A549 (cell line): ENCODE measurements at regions of chr5 and their contacts with region 1.

Region 1: GRCh38 chr5:36690041-36690961 is 83.9 kb downstream of the SLC1A3 start:
- DNase-seq: peak; percentile 79 to 85
- ATAC-seq: peak; percentile 90 to 95
- H3K4me3 ChIP-seq: peak overlapping the region; percentile 45
- H3K27ac ChIP-seq: peak overlapping the region; percentile 26 to 71; a peak in 5 of 6 replicates
- H3K4me1 ChIP-seq: 0 out of 3 replicates have a peak, but pooled peaks cover 4% of the 10 kb centered on the region
- CTCF ChIP-seq: peak; percentile 67
- EP300 ChIP-seq: no peak
- POLR2A ChIP-seq: no peak
- RAD21 ChIP-seq: peak in 1 of 2 experiments; percentile 29; a peak in 2 of 5 replicates

Region 2: DNA sequence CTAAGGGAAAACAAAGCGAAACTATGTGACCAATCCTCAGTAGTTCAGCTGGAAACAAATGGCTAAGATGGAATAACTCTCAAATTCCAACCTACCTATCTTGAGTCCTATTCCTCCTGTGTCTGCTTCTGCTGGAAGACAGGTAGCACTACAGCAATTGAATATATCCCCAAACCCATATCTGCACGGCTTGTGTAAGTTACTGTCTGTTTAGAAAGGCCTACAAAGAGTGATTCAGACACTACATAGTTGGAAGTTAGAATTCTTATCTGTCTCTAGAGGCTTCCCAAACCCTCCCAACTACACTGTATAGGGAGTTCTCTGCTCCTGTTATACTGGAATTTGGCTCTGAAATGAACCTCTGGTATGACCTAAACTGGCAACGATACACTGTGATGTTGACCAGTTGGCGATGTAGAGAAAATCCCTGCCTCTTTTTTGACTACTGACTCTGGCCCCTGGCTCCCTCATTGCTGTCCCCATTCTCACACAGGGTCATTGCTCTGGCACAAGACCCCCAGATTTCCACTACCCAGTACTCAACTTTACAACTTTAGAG is 426.0 kb before region 1 on chr5:
- CTCF ChIA-PET with region 1: interaction called, 15 read pairs
- POLR2A ChIA-PET with region 1: no interaction called
- DNase-seq: no peak
- ATAC-seq: 0 out of 6 replicates have a peak, but pooled peaks of 1 of the 2 experiments have one; percentile 39
- H3K4me3 ChIP-seq: no peak overlapping the region
- H3K27ac ChIP-seq: no peak overlapping the region
- H3K4me1 ChIP-seq: no peaks in the 10 kb centered on the region
- CTCF ChIP-seq: no peak
- EP300 ChIP-seq: no peak
- POLR2A ChIP-seq: no peak
- RAD21 ChIP-seq: no peak

Region 3: DNA sequence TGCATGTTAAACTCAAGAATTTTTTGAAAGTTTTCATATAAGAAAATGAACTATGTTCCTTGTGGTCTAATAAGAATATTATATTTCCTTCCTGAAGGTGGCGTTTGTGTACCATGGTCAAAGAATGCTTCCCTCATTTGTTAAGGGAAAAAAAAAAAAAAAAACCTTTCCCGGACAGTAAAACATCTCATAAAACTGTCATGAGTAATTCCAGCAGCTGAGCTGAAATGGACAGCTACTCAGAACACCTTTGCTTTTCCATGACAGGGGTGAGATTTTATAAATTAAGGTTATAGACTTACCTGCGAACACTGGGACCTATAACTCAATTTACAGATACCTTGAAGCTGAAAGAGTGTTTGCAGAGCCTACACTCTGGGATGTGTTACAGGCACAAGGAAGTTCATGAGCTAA is 275.4 kb before region 1 on chr5:
- CTCF ChIA-PET with region 1: interaction called, 60 read pairs
- POLR2A ChIA-PET with region 1: no interaction called
- DNase-seq: peak in 1 of 2 experiments; percentile 55
- ATAC-seq: peak in 1 of 2 experiments; percentile 50; a peak in 3 of 6 replicates
- H3K4me3 ChIP-seq: no peak overlapping the region
- H3K27ac ChIP-seq: no peak overlapping the region
- H3K4me1 ChIP-seq: no peaks in the 10 kb centered on the region
- CTCF ChIP-seq: peak; percentile 57
- EP300 ChIP-seq: no peak
- POLR2A ChIP-seq: no peak
- RAD21 ChIP-seq: peak; percentile 60 to 67

Region 4: DNA sequence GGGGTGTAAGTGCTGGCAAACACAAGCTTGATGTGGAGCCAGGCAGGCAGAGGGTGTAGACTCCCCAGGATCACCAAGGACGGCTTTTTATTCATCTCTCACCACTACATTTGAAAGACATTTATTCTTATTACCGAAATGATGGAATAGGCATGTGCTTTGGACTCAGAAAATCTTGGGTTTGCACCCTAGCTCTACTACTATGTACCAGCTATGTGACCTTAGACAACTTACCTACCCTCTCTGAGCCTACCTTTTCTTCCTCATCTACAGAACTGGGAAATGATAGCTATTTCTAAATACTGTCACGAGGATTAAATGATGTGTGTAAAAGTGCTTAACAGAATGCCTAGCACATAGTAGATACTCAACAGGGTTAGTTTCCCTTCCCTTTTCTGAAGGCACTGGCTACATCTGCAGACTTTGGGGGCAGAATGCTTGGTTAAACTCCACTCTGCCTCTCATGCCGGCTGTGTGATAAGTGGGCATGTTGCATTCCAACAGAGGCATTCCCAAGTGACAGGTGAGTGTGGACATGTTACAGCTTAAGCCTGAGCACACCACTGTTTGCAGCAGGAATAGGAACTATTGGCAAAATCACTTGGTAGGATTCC is 10.9 kb after region 1 on chr5:
- CTCF ChIA-PET with region 1: interaction called, 16 read pairs
- POLR2A ChIA-PET with region 1: no interaction called
- DNase-seq: no peak
- ATAC-seq: no peak
- H3K4me3 ChIP-seq: no peak overlapping the region
- H3K27ac ChIP-seq: no peak overlapping the region
- H3K4me1 ChIP-seq: no peaks in the 10 kb centered on the region
- CTCF ChIP-seq: no peak
- EP300 ChIP-seq: no peak
- POLR2A ChIP-seq: no peak
- RAD21 ChIP-seq: no peak

Region 5: GRCh38 chr5:37375091-37375490 is 684.8 kb after region 1 on chr5:
- CTCF ChIA-PET with region 1: no interaction called
- POLR2A ChIA-PET with region 1: no interaction called
- DNase-seq: no peak
- ATAC-seq: no peak
- H3K4me3 ChIP-seq: no peak overlapping the region
- H3K27ac ChIP-seq: no peak overlapping the region
- H3K4me1 ChIP-seq: peaks cover under 1% of the 10 kb centered on the region; the same call in 1 of the 3 replicates
- CTCF ChIP-seq: no peak
- EP300 ChIP-seq: no peak
- POLR2A ChIP-seq: no peak
- RAD21 ChIP-seq: no peak